AG04450 (cell line): ENCODE measurements at regions of chr2 and their contacts with region 1.

Region 1: GRCh38 chr2:223051693-223052289 is at the start of gene KCNE4:
- DNase-seq: no peak
- H3K4me3 ChIP-seq: peak within 1 kb of the TSS; percentile 73
- H3K27ac ChIP-seq: peak within 1 kb of the TSS; percentile 68
- H3K27me3 ChIP-seq: no peaks in the 10 kb centered on the region
- CTCF ChIP-seq: no peak
- polyA plus RNA-seq, gene KCNE4: 10.6 and 12.5 TPM in 2 replicates

Region 2: GRCh38 chr2:222930862-222931261 is 120.9 kb before region 1 on chr2:
- CTCF ChIA-PET with region 1: no interaction called
- POLR2A ChIA-PET with region 1: interaction called, 10 read pairs
- DNase-seq: no peak
- H3K4me3 ChIP-seq: no peak overlapping the region
- H3K27ac ChIP-seq: no peak overlapping the region
- H3K27me3 ChIP-seq: no peaks in the 10 kb centered on the region
- CTCF ChIP-seq: no peak

Region 3: GRCh38 chr2:223029287-223029686 is 22.5 kb before region 1 on chr2:
- CTCF ChIA-PET with region 1: no interaction called
- POLR2A ChIA-PET with region 1: no interaction called
- DNase-seq: no peak
- H3K4me3 ChIP-seq: no peak overlapping the region
- H3K27ac ChIP-seq: no peak overlapping the region
- H3K27me3 ChIP-seq: no peaks in the 10 kb centered on the region
- CTCF ChIP-seq: no peak

Region 4: GRCh38 chr2:223041527-223042109 is 10.2 kb before region 1 on chr2:
- CTCF ChIA-PET with region 1: interaction called, 3 read pairs
- POLR2A ChIA-PET with region 1: interaction called, 10 read pairs
- DNase-seq: peak; percentile 93
- H3K4me3 ChIP-seq: no peak overlapping the region
- H3K27ac ChIP-seq: peak overlapping the region; percentile 83
- H3K27me3 ChIP-seq: no peaks in the 10 kb centered on the region
- CTCF ChIP-seq: no peak

Region 5: GRCh38 chr2:223062396-223062795 is 10.6 kb after region 1 on chr2:
- CTCF ChIA-PET with region 1: no interaction called
- POLR2A ChIA-PET with region 1: interaction called, 10 read pairs
- DNase-seq: no peak
- H3K4me3 ChIP-seq: no peak overlapping the region
- H3K27ac ChIP-seq: no peak overlapping the region
- H3K27me3 ChIP-seq: no peaks in the 10 kb centered on the region
- CTCF ChIP-seq: no peak

Region 6: GRCh38 chr2:223072826-223073225 is 21.0 kb after region 1 on chr2:
- CTCF ChIA-PET with region 1: no interaction called
- POLR2A ChIA-PET with region 1: no interaction called
- DNase-seq: no peak
- H3K4me3 ChIP-seq: no peak overlapping the region
- H3K27ac ChIP-seq: no peak overlapping the region
- H3K27me3 ChIP-seq: no peaks in the 10 kb centered on the region
- CTCF ChIP-seq: no peak

Region 7: DNA sequence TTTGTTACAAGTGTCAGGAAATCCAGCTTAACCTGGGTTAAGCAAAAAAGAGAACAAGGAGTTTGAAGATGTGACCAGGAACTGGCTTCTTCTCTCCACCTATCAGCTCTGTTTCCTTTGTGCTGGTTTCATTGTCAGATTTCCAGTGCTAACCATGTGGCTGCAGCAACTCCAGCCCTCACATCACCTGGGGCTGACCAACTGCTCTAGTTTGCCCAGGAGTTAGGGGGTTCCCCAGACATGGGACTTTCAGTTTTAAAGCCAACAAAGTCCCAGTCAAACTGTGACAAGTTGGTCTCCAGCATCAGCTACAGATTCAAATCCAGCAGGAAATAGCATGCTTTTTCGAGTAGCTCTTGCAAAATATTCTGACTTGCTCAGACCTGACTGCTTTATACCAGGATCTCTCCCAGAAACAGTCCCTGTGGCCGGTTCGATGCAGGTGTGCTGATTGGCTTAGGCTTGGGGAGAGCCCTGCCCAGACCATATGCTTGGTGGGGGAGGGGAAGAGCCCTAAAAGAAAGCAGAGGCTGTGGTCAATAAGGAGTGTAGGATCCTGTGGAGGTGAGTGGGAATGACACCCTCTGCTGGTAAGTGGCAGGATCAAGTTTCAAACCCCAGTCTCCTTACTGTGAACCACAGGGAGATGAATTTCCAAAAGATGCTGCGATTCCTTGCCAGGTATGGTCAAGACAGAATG is 49.7 kb after region 1 on chr2:
- CTCF ChIA-PET with region 1: interaction called, 10 read pairs
- POLR2A ChIA-PET with region 1: interaction called, 3 read pairs
- DNase-seq: no peak
- H3K4me3 ChIP-seq: no peak overlapping the region
- H3K27ac ChIP-seq: no peak overlapping the region
- H3K27me3 ChIP-seq: no peaks in the 10 kb centered on the region
- CTCF ChIP-seq: peak; percentile 66

Region 8: DNA sequence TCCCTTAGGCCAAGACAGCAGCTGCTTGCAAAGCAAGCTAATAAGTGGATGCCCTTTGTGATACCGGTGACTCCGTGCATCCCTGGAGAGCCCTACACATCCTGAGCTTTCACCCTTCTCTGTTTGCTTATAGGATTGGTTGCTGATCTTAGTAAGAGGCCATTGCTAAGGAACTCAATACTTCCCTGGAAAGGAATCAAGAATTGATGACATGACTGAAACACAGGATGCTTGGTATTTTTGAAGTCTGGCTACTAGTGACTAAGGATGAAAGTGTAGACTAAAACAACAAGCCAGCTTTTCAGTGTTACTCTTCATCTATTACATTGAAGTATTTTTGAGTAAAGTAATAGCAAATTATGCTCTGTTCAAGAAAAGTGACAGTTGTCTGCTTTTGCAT is 1110.3 kb after region 1 on chr2:
- CTCF ChIA-PET with region 1: no interaction called
- POLR2A ChIA-PET with region 1: interaction called, 11 read pairs
- DNase-seq: peak; percentile 20
- H3K4me3 ChIP-seq: no peak overlapping the region
- H3K27ac ChIP-seq: no peak overlapping the region
- H3K27me3 ChIP-seq: no peaks in the 10 kb centered on the region
- CTCF ChIP-seq: no peak